H1 (cell line): ENCODE measurements at regions of chr1 and their contacts with region 1.

Region 1: GRCh38 chr1:3746830-3747521 is 5.3 kb upstream of the CCDC27 start:
- DNase-seq: peak; percentile 70 to 99
- H3K4me3 ChIP-seq: peak overlapping the region; percentile 75 to 87 (median 82)
- H3K27ac ChIP-seq: peak overlapping the region; percentile 42; the same call in 1 of the 2 replicates
- H3K4me1 ChIP-seq: peaks cover 0 to 16% (median 13%) of the 10 kb centered on the region in 4 experiments; a peak in 6 of 7 replicates
- H3K27me3 ChIP-seq: peaks cover 0 to 3% (median 0%) of the 10 kb centered on the region in 4 experiments; a peak in 5 of 7 replicates
- CTCF ChIP-seq: 0 out of 4 replicates have a peak, but pooled peaks of 1 of the 3 experiments have one; percentile 11
- EP300 ChIP-seq: no peak
- POLR2A ChIP-seq: peak in 1 of 2 experiments; percentile 65; a peak in 1 of 3 replicates
- RAD21 ChIP-seq: no peak

Region 2: GRCh38 chr1:3732434-3733093 is 14.4 kb before region 1 on chr1:
- CTCF ChIA-PET with region 1: interaction called, 4 read pairs
- POLR2A ChIA-PET with region 1: interaction called, 12 read pairs
- DNase-seq: peak in 1 of 2 experiments; percentile 83
- H3K4me3 ChIP-seq: peak overlapping the region in 3 of 4 experiments; percentile 11 to 45 (median 17); a peak in 4 of 8 replicates
- H3K27ac ChIP-seq: peak overlapping the region; percentile 5; the same call in 1 of the 2 replicates
- H3K4me1 ChIP-seq: peaks cover 0 to 19% (median 13%) of the 10 kb centered on the region in 4 experiments; a peak in 5 of 7 replicates
- H3K27me3 ChIP-seq: no peaks in the 10 kb centered on the region; a peak in 3 of 7 replicates
- CTCF ChIP-seq: peak in 2 of 3 experiments; percentile 17 to 27; a peak in 2 of 4 replicates
- EP300 ChIP-seq: no peak
- POLR2A ChIP-seq: no peak
- RAD21 ChIP-seq: peak in 1 of 2 experiments; percentile 1; a peak in 1 of 4 replicates

Region 3: DNA sequence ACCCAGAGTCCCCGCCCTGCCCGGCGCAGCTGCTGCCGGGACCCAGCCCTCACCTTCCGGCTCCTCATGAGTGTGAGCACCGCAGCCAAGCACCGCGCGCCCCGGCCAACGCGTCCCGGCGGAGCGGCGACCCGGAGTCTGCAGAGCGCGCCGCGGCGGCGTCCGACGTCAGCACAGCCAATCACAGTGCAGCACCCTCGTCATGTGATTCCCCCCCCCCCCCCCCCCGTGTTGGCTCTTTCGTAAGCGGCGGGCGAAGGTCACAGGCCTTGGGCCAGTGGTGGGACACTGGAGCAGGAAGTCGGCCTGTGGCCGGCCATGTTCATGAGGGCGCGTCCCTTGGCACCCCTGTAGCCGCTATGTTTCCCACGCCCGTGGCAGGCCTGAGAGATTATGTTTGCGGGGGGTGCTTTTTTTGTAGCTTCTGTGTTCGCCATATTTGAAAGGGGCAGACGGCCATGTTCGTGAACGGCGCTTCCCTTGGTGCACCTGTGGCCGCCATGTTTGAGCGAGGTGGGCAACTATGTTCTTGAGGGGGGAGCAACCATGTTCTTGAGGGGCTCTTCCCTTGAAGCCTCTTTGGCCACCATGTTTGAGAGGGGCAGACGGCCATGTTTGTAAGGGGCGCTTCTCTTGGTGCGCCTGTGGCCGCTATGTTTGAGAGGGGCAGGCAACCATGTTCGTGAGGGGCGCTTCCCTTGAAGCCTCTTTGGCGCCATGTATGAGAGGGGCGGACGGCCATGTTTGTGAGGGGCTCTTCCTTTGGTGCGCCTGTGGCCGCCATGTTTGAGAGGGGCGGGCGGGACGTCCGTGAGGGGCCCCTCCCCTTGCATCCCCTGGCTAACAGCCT is 153.4 kb after region 1 on chr1 and contains the start of gene C1orf174:
- CTCF ChIA-PET with region 1: no interaction called
- POLR2A ChIA-PET with region 1: no interaction called
- DNase-seq: peak; percentile 90 to 97
- H3K4me3 ChIP-seq: peak within 1 kb of the TSS; percentile 78 to 92 (median 84)
- H3K27ac ChIP-seq: peak within 1 kb of the TSS; percentile 98
- H3K4me1 ChIP-seq: peaks cover 0 to 12% (median 3%) of the 10 kb centered on the region in 4 experiments; a peak in 1 of 7 replicates
- H3K27me3 ChIP-seq: no peaks in the 10 kb centered on the region
- CTCF ChIP-seq: no peak
- EP300 ChIP-seq: no peak
- POLR2A ChIP-seq: peak; percentile 63 to 70; a peak in 2 of 3 replicates
- RAD21 ChIP-seq: no peak
- total RNA-seq, gene C1orf174: 28.4 and 28.5 TPM in 2 replicates